ENCODE measurements at regions of chr10 and their contacts with region 1.

Region 1: DNA sequence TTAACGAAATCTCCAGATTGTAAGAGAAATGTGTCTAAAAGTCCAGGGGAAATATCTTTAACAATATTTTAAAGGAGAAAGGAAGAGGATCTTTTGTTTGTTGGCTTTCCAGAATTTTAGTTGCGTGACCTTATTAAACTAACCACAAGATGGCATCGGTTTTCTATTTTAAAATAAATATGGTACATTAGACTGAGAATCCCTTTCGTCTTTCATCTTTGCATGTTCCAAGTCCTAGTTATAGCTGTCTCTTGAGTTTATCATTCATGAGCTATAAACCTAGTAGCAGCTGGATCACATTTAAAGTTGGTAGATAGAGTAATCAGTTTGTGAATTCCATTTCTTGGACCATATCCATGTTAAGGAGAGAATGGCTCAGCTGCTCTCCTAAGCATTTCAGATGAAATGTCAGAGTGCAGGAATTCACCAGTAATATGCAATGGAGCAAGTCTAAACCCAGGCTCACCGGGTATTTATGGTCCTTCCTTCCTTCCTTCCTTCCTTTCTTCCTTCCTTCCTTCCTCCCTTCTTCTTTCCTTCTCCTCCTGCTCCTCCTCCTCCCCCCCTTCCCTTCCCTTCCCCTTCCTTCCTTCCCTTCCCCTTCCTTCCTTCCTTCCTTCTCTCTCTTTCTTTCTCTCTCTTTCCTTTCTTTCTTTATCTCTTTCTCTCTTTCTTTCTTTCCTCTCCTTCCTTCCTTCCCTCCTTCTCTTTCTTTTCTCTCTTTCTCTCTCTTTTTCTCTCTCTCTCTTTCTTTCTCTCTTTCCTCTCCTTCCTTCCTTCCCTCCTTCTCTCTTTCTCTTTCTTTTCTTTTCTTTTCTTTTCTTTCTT is 57.8 kb upstream of the RAB18 start:
- DNase-seq: peak in 6 of 9 donors; percentile 23 to 58 (median 46)
- ATAC-seq: peak; percentile 65
- H3K4me3 ChIP-seq: no peak overlapping the region
- H3K4me3 Mint-ChIP-seq: peak overlapping the region in 3 of 10 donors; percentile 20 to 53 (median 23)
- H3K27ac ChIP-seq: no peak overlapping the region
- H3K27ac Mint-ChIP-seq: peak overlapping the region in 1 of 9 donors; percentile 32
- H3K4me1 ChIP-seq: no peaks in the 10 kb centered on the region
- H3K4me1 Mint-ChIP-seq: peaks cover 6 to 19% (median 17%) of the 10 kb centered on the region in 7 donors
- H3K27me3 ChIP-seq: no peaks in the 10 kb centered on the region
- H3K27me3 Mint-ChIP-seq: peaks cover 0 to 16% (median 0%) of the 10 kb centered on the region in 5 donors

Region 2: DNA sequence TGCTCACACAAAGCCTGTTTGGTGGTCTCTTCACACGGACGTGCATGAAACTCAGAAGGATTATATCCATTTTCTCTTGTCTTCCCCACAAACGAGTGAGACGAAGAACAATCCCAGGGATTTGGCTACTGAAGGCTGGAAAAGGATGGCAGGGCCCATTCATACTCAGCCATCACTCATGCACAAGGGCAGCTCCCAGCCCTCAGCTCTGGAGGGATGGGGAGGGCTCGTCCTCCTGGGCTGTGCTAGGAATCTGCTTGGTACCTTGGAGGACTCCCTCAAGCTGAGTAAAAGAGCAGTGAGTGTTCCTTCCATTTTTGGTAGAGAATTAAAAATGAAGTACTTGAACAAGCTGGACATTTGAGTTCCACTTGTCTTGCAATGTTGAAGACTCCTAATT is 24.6 kb after region 1 on chr10:
- CTCF ChIA-PET with region 1: no interaction called
- POLR2A ChIA-PET with region 1: no interaction called
- intact Hi-C with region 1: no loop called
- DNase-seq: no peak
- ATAC-seq: no peak
- H3K4me3 ChIP-seq: no peak overlapping the region
- H3K4me3 Mint-ChIP-seq: no peak overlapping the region
- H3K27ac ChIP-seq: no peak overlapping the region
- H3K27ac Mint-ChIP-seq: no peak overlapping the region
- H3K4me1 ChIP-seq: no peaks in the 10 kb centered on the region
- H3K4me1 Mint-ChIP-seq: peaks cover 3 to 13% (median 6%) of the 10 kb centered on the region in 7 donors
- H3K27me3 ChIP-seq: peaks cover 0 to 2% of the 10 kb centered on the region in 2 donors
- H3K27me3 Mint-ChIP-seq: peaks cover 0 to 25% (median 0%) of the 10 kb centered on the region in 5 donors

Region 3: GRCh38 chr10:27490807-27491206 is 44.5 kb after region 1 on chr10:
- CTCF ChIA-PET with region 1: interaction called, 3 read pairs
- POLR2A ChIA-PET with region 1: no interaction called
- intact Hi-C with region 1: loop called in 1 of 2 experiments (anchors 1 kb)
- DNase-seq: no peak
- ATAC-seq: no peak
- H3K4me3 ChIP-seq: no peak overlapping the region
- H3K4me3 Mint-ChIP-seq: no peak overlapping the region
- H3K27ac ChIP-seq: no peak overlapping the region
- H3K27ac Mint-ChIP-seq: no peak overlapping the region
- H3K4me1 ChIP-seq: no peaks in the 10 kb centered on the region
- H3K4me1 Mint-ChIP-seq: peaks cover 0 to 3% (median 0%) of the 10 kb centered on the region in 7 donors
- H3K27me3 ChIP-seq: peaks cover 0 to 3% of the 10 kb centered on the region in 2 donors
- H3K27me3 Mint-ChIP-seq: peaks cover 21 to 65% (median 32%) of the 10 kb centered on the region in 5 donors

Region 4: GRCh38 chr10:27558612-27559020 is 112.3 kb after region 1 on chr10:
- CTCF ChIA-PET with region 1: no interaction called
- POLR2A ChIA-PET with region 1: no interaction called
- intact Hi-C with region 1: loop called in 1 of 2 experiments (anchors 5 kb)
- DNase-seq: peak in 3 of 9 donors; percentile 10 to 25 (median 15)
- ATAC-seq: peak; percentile 63
- H3K4me3 ChIP-seq: no peak overlapping the region
- H3K4me3 Mint-ChIP-seq: no peak overlapping the region
- H3K27ac ChIP-seq: no peak overlapping the region
- H3K27ac Mint-ChIP-seq: peak overlapping the region in 1 of 9 donors; percentile 36
- H3K4me1 ChIP-seq: peaks cover 0 to under 1% of the 10 kb centered on the region in 2 donors
- H3K4me1 Mint-ChIP-seq: peaks cover 0 to 4% (median 0%) of the 10 kb centered on the region in 7 donors
- H3K27me3 ChIP-seq: no peaks in the 10 kb centered on the region
- H3K27me3 Mint-ChIP-seq: peaks cover 0 to 16% (median 0%) of the 10 kb centered on the region in 5 donors

Region 5: DNA sequence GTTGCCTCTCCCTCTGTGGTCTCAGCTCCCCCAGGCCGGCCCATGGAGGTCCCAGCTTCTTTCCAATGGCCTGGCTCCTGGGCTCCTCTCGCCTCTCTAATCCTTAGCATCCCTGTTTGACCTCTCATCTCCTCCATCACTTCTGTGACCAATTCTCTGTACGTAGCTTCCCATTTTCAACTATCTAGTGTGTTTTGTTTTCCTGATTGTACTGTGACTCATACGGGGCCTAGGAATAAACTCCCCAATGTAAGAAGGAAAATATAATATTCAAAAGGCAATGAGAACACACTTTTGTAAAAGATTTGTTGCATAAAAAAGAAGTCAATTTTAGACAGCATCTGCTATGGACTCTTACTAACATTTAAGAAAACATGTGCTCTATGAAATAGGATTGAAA is 209.0 kb after region 1 on chr10:
- CTCF ChIA-PET with region 1: interaction called, 13 read pairs
- POLR2A ChIA-PET with region 1: no interaction called
- intact Hi-C with region 1: loop called (anchors 1 kb)
- DNase-seq: no peak
- ATAC-seq: no peak
- H3K4me3 ChIP-seq: no peak overlapping the region
- H3K4me3 Mint-ChIP-seq: no peak overlapping the region
- H3K27ac ChIP-seq: no peak overlapping the region
- H3K27ac Mint-ChIP-seq: no peak overlapping the region
- H3K4me1 ChIP-seq: no peaks in the 10 kb centered on the region
- H3K4me1 Mint-ChIP-seq: peaks cover 0 to 11% (median 7%) of the 10 kb centered on the region in 7 donors
- H3K27me3 ChIP-seq: no peaks in the 10 kb centered on the region
- H3K27me3 Mint-ChIP-seq: peaks cover 7 to 28% (median 15%) of the 10 kb centered on the region in 5 donors

Region 6: GRCh38 chr10:27661514-27662286 is 215.4 kb after region 1 on chr10:
- CTCF ChIA-PET with region 1: interaction called, 13 read pairs
- POLR2A ChIA-PET with region 1: no interaction called
- intact Hi-C with region 1: loop called (anchors 1 kb)
- DNase-seq: no peak
- ATAC-seq: no peak
- H3K4me3 ChIP-seq: no peak overlapping the region
- H3K4me3 Mint-ChIP-seq: no peak overlapping the region
- H3K27ac ChIP-seq: no peak overlapping the region
- H3K27ac Mint-ChIP-seq: no peak overlapping the region
- H3K4me1 ChIP-seq: no peaks in the 10 kb centered on the region
- H3K4me1 Mint-ChIP-seq: peaks cover 0 to 7% (median 0%) of the 10 kb centered on the region in 7 donors
- H3K27me3 ChIP-seq: peaks cover 0 to 4% of the 10 kb centered on the region in 2 donors
- H3K27me3 Mint-ChIP-seq: peaks cover 31 to 53% (median 39%) of the 10 kb centered on the region in 5 donors

Region 7: GRCh38 chr10:28179006-28179742 is 732.9 kb after region 1 on chr10:
- CTCF ChIA-PET with region 1: no interaction called
- POLR2A ChIA-PET with region 1: no interaction called
- intact Hi-C with region 1: loop called (anchors 1 kb)
- DNase-seq: peak in 7 of 9 donors; percentile 18 to 63 (median 49)
- ATAC-seq: peak; percentile 86
- H3K4me3 ChIP-seq: peak overlapping the region; percentile 55
- H3K4me3 Mint-ChIP-seq: peak overlapping the region; percentile 0 to 98 (median 87)
- H3K27ac ChIP-seq: peak overlapping the region; percentile 54
- H3K27ac Mint-ChIP-seq: peak overlapping the region; percentile 77 to 98 (median 92)
- H3K4me1 ChIP-seq: peaks cover 10 to 12% of the 10 kb centered on the region in 2 donors
- H3K4me1 Mint-ChIP-seq: peaks cover 17 to 70% (median 55%) of the 10 kb centered on the region in 7 donors
- H3K27me3 ChIP-seq: no peaks in the 10 kb centered on the region
- H3K27me3 Mint-ChIP-seq: peaks cover 0 to 9% (median 0%) of the 10 kb centered on the region in 5 donors

Region 8: DNA sequence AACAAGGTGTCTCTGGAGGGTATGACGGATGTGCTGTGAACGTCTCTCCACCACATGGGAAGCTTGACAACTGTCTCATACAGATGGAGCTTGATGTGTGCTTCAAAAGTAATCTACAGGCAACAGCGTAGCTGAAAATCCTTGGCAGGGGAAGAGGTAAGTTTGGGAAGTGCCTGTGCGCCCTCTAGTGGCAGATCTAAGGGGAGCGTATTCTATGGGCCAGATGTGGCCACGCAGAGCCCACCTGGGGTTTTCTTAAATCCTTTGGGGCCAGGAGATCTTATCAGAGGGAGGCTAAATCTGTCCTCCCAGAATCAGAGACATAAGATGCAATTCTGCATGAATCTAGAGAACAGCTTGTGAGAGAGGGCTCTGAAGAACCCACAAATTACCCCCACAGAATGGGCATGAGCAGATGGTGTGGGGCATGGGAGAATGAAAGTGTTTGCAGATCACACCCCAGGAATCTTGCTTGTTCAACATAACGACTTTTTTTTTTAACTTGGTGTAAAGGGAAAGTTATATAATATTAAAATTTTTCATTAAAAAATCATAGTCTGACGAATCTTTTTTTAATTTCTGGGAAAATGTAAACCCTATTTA is 947.8 kb after region 1 on chr10:
- CTCF ChIA-PET with region 1: no interaction called
- POLR2A ChIA-PET with region 1: no interaction called
- intact Hi-C with region 1: loop called in 1 of 2 experiments (anchors 1 kb)
- DNase-seq: peak; percentile 36 to 70 (median 53)
- ATAC-seq: peak; percentile 87
- H3K4me3 ChIP-seq: no peak overlapping the region
- H3K4me3 Mint-ChIP-seq: no peak overlapping the region
- H3K27ac ChIP-seq: no peak overlapping the region
- H3K27ac Mint-ChIP-seq: peak overlapping the region in 2 of 9 donors; percentile 12 to 35
- H3K4me1 ChIP-seq: no peaks in the 10 kb centered on the region
- H3K4me1 Mint-ChIP-seq: peaks cover 0 to 6% (median 5%) of the 10 kb centered on the region in 7 donors
- H3K27me3 ChIP-seq: no peaks in the 10 kb centered on the region
- H3K27me3 Mint-ChIP-seq: peaks cover 0 to 6% (median 0%) of the 10 kb centered on the region in 5 donors